Activated CD8-positive, alpha-beta memory T cell treated with anti-CD3 and anti-CD28 coated beads, Interleukin-2, amount 10 ng/mL, durations not matched to agents 7 days and 5 days (primary cell): ENCODE measurements at regions of chr7 and their contacts with region 1.

Region 1: GRCh38 chr7:44973610-44974401 is 5.0 kb downstream of the MYO1G start:
- DNase-seq: peak; percentile 71
- ATAC-seq: no peak
- H3K4me3 Mint-ChIP-seq: no peak overlapping the region
- H3K27ac Mint-ChIP-seq: peak overlapping the region; percentile 26
- H3K4me1 Mint-ChIP-seq: peaks cover 47% of the 10 kb centered on the region
- H3K27me3 Mint-ChIP-seq: no peaks in the 10 kb centered on the region

Region 2: DNA sequence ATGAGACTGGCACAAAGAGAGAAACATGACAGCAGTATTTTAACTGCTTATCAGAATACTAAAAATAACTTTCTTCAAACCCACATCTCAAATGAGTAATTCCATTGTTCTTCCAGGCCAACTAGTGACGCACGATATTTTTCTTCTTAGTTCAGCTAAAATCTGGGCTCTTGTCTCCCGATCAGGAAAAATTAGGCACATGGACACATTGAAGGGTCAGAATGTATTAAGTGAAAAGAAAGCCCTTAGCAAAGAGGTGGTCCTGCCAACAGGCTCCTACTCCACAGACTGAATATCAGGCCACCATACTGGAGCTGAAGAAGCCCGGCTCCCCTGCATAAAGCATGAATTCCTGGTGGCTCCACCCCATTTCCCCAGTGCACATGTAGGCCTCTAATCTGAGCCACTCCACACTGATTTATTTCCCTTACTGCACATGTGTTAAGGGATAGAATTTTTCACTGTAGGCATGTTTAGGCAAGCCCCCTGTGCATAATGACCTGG is 16.8 kb after region 1 on chr7:
- CTCF ChIA-PET with region 1: interaction called, 10 read pairs
- DNase-seq: no peak
- ATAC-seq: no peak
- H3K4me3 Mint-ChIP-seq: no peak overlapping the region
- H3K27ac Mint-ChIP-seq: no peak overlapping the region
- H3K4me1 Mint-ChIP-seq: peaks cover 37% of the 10 kb centered on the region
- H3K27me3 Mint-ChIP-seq: no peaks in the 10 kb centered on the region

Region 3: GRCh38 chr7:44999245-45000095 is 25.7 kb after region 1 on chr7:
- CTCF ChIA-PET with region 1: interaction called, 29 read pairs
- DNase-seq: peak; percentile 100
- ATAC-seq: peak; percentile 92
- H3K4me3 Mint-ChIP-seq: peak overlapping the region; percentile 84
- H3K27ac Mint-ChIP-seq: peak overlapping the region; percentile 84
- H3K4me1 Mint-ChIP-seq: peaks cover 59% of the 10 kb centered on the region
- H3K27me3 Mint-ChIP-seq: no peaks in the 10 kb centered on the region

Region 4: GRCh38 chr7:45026984-45027773 is 53.4 kb after region 1 on chr7:
- CTCF ChIA-PET with region 1: interaction called, 27 read pairs
- DNase-seq: peak; percentile 68
- ATAC-seq: peak; percentile 62
- H3K4me3 Mint-ChIP-seq: peak overlapping the region; percentile 82
- H3K27ac Mint-ChIP-seq: peak overlapping the region; percentile 86
- H3K4me1 Mint-ChIP-seq: peaks cover 71% of the 10 kb centered on the region
- H3K27me3 Mint-ChIP-seq: no peaks in the 10 kb centered on the region

Region 5: DNA sequence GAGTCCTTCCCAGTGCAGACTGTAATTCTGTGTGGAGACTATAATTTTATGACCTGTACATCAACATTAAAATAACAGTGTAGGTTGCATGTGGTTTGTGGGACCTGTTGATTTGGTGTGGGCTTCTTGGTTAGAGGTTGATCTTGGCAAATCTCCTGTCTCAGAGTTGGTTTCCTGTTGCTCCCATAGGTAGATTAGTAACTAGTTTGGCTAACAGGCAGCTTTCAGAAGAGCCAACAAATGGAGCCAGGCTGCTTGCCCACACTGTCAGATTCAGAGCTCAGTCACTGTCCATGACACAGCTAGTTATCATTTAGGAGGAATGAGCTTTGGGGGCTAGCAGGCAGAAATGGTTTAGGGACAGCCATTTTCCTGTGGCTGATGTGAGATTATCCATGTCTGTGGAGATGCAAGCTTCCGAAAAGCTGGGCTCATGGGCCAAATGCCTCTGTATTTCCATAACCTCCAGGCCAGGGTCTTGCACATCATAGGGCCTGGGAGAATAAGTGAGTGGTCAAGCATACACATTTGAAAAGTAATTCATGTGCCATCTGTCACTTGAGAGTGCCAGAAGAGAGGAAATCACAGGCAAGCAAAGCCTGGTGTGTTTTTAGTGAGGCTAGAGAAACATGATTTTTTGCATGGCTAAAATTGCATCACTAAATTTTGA is 59.6 kb after region 1 on chr7:
- CTCF ChIA-PET with region 1: interaction called, 27 read pairs
- DNase-seq: peak; percentile 66
- ATAC-seq: peak; percentile 41
- H3K4me3 Mint-ChIP-seq: peak overlapping the region; percentile 55
- H3K27ac Mint-ChIP-seq: peak overlapping the region; percentile 78
- H3K4me1 Mint-ChIP-seq: peaks cover 81% of the 10 kb centered on the region
- H3K27me3 Mint-ChIP-seq: no peaks in the 10 kb centered on the region

Region 6: GRCh38 chr7:45052011-45052410 is 78.2 kb after region 1 on chr7:
- CTCF ChIA-PET with region 1: interaction called, 10 read pairs
- DNase-seq: no peak
- ATAC-seq: no peak
- H3K4me3 Mint-ChIP-seq: no peak overlapping the region
- H3K27ac Mint-ChIP-seq: no peak overlapping the region
- H3K4me1 Mint-ChIP-seq: peaks cover 10% of the 10 kb centered on the region
- H3K27me3 Mint-ChIP-seq: no peaks in the 10 kb centered on the region